Heart right ventricle (tissue), 16 donors: ENCODE measurements at regions of chr9 and their contacts with region 1.

Region 1: DNA sequence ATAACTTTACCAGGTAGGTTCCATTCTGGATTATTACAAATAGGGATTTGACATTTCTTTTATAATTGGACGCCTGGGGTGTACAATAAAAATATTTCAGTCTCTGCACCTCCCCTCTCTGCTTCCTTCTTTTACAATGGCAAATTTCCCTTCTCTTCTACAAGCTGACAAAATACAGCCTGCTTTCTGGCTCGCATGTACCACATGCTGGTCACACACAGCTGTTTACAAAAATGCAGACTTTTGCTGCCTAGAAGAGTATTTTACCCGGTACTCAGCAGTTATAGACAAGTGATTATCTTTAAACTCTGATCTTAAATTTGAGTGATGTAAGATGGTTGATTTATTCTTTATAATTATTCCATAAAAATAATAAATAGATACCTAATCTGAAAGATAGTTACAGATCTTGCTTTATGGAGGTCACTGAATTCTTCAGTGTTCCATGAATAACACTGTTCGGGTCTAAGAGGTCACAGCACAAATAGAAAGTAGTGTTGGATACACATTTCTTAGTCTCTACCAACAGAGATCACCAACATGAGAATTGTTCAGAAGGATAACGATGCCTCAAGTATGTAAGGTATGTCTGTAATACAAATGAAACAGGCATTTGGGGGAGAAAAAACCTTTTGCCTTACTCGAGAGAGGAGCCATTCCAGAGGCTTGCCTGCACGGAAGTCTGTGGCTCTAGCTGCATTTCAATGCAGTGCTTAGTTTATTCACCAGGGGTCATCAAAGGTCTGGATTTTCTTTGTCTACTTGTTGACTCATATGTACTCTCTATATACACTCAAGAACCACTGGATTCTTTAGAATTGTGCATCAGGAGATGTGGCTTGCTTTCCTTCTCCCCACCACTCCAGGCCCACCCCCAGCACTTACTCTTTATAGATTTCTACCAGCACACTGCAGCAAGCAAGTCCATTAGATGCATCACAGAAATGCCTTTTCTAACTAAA is 206.6 kb upstream of the RFX3 start:
- DNase-seq: peak in 1 of 2 donors; percentile 53
- ATAC-seq: peak; percentile 88 to 97 (median 95)
- H3K4me3 ChIP-seq: peak overlapping the region in 7 of 10 donors; percentile 8 to 38 (median 22)
- H3K27ac ChIP-seq: peak overlapping the region in 5 of 10 donors; percentile 4 to 51 (median 42)
- H3K4me1 ChIP-seq: peaks cover 0 to 23% (median 6%) of the 10 kb centered on the region in 9 donors
- H3K27me3 ChIP-seq: no peaks in the 10 kb centered on the region
- CTCF ChIP-seq: peak; percentile 36 to 84 (median 78)

Region 2: DNA sequence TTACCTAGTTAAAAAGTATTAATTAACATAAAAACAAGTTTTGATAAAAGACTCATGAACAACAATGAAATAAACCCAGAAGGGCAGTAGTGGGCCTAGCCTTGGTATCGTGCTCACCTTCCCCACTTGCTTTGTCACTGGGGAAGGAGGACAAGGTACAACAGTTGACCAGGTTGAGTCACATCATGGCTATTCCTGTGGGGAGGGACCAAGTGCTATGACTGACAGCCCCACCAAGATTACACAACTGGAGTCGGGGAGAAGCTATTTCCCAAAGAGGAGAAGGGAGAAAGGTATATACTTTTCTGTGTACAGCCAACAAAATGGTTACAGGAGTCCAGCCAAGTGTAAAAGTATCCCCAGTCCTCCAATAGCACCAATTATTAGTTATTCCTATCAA is 44.8 kb after region 1 on chr9:
- intact Hi-C with region 1: no loop called
- DNase-seq: no peak
- ATAC-seq: no peak
- H3K4me3 ChIP-seq: no peak overlapping the region
- H3K27ac ChIP-seq: no peak overlapping the region
- H3K4me1 ChIP-seq: no peaks in the 10 kb centered on the region
- H3K27me3 ChIP-seq: peaks cover 0 to 5% (median 0%) of the 10 kb centered on the region in 7 donors
- CTCF ChIP-seq: no peak

Region 3: DNA sequence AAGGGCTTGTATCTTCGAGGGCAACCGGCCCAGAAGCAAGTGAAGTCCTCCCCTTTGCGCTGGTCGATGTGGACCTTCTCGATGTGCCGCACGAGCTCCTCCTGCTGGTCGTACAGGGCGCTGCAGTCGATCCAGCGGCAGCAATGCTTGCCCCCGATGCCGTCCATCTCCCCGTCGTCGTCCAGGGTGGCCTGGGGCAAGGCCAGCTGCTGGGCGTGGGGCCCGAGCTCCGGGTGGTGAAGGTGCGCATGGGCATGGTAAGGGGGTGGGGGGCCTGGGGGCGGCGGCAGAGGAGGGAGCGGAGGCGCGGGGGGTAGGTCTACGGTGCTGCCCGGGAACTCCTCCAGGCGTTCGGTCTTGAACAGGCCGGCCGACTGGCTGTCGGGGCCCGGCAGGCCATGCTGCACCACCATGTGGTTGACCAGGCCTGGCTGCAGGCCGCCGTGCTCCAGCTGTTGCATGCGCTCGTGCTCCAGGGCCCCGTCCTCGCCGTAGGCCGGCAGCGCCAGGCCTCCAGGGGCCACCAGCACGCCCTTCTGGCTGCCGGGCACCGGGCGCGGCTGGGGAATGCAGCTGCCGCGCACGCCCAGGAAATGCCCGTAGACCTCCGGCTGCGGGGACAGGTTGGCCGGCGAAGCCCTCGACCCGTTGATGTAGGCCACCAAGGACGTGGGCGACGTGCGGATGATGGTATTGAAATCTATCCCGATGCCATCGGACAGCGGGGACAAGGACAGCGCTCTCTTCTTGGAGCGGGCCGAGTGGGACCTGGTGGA is 385.7 kb after region 1 on chr9:
- intact Hi-C with region 1: loop called in 6 of 10 experiments (anchors 2 to 10 kb)
- DNase-seq: peak in 1 of 2 donors; percentile 45
- ATAC-seq: peak in 3 of 8 donors; percentile 14 to 53 (median 44)
- H3K4me3 ChIP-seq: no peak overlapping the region
- H3K27ac ChIP-seq: peak overlapping the region in 4 of 10 donors; percentile 7 to 34 (median 27)
- H3K4me1 ChIP-seq: peaks cover 0 to 30% (median 8%) of the 10 kb centered on the region in 9 donors
- H3K27me3 ChIP-seq: no peaks in the 10 kb centered on the region
- CTCF ChIP-seq: peak in 8 of 9 donors; percentile 25 to 64 (median 48)

Region 4: DNA sequence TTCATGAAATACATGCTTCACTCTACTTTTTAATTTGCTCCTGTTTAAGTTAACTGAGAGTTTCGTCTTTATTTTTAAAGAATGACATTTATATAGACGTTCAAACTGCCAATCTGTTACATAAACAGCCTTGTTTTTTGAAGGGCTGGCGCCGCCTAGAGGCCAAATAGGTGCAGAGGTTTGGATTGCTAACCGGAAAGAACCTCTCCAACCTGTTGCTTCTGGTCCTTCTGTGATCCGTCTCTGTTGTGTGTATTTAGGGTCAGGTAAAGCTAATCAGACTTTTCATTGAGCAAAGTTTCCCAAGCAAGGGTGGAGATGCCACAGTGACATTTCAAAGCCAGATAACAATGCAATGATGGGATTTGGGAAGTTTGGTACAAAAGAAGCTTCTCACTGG is 607.0 kb after region 1 on chr9:
- intact Hi-C with region 1: loop called in 8 of 10 experiments (anchors 10 kb)
- DNase-seq: peak; percentile 79 to 81
- ATAC-seq: peak in 7 of 8 donors; percentile 49 to 85 (median 68)
- H3K4me3 ChIP-seq: no peak overlapping the region
- H3K27ac ChIP-seq: no peak overlapping the region
- H3K4me1 ChIP-seq: peaks cover 0 to 9% (median 3%) of the 10 kb centered on the region in 9 donors
- H3K27me3 ChIP-seq: no peaks in the 10 kb centered on the region
- CTCF ChIP-seq: peak; percentile 81 to 95 (median 92)

Region 5: DNA sequence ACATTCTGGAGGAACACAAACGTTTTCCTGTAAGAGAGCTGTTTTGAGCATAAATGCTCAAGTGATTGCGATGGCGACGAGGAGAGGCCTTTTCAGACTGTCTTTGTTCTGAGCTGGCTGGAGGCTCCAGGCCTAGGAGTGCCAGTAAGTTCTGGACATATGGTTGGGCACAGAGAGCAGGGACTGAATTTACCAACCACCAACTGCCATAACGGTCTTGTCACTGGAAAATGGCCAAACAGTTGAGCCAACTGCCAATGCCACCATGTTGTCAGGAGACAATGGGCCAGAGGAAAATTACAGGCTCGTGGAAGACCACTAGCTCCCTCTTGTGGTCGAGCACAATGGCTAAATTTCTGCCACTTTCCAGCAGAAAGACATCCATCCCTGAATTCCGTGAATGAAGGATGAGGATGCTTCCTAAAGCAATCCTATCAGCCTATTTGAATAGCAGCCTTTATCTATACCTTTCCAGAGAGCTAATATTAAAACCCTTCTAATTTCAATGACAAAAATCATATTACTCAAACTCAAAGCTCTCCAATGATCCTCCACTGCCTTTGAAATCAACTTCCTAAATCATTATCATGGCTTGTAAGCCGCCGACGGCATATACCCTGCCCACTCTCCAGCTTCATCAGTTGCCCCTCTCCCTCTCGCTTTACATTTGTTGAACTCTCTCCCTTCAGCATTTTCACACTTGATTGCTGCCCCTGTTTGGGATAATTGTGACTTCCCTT is 634.4 kb after region 1 on chr9:
- intact Hi-C with region 1: loop called in 2 of 10 experiments (anchors 2 to 5 kb)
- DNase-seq: no peak
- ATAC-seq: peak in 2 of 8 donors; percentile 31 to 42
- H3K4me3 ChIP-seq: no peak overlapping the region
- H3K27ac ChIP-seq: no peak overlapping the region
- H3K4me1 ChIP-seq: no peaks in the 10 kb centered on the region
- H3K27me3 ChIP-seq: no peaks in the 10 kb centered on the region
- CTCF ChIP-seq: peak; percentile 14 to 75 (median 57)